Activated naive CD4-positive, alpha-beta T cell treated with anti-CD3 and anti-CD28 coated beads for 36 hours (primary cell): ENCODE measurements at regions of chr10 and their contacts with region 1.

Region 1: DNA sequence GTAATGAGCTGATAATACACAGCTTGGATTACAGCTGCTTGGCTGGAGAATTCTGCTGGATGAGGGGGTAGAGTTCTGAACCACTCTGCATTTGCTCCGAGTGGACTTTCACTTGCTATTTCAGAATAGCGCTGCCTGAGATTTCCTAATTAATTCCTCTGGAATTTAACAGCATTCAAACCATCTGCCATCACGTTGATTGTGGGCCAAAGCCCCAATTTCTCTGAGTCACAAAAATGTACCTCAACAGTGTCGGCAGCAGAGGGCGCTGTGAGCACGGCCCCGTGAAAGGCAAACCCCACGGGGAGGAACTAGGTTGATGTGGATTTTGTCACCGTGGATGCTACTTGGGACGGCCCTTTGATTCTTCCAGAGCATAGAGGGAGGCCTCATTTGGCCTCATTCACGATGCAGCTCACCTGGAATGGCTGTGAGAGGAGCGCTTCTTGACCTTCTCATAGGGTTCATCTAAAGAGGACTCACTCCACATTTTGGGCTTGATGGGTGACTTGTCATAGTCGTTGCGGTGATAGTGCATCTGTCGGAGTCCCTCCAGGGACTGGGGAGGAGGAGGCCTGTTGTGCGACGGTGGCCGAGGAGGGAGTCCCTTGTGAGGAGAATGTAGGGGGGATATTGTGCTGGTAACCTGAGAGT is 73.3 kb downstream of the PRPF18 start:
- DNase-seq: peak; percentile 82
- H3K4me3 Mint-ChIP-seq: no peak overlapping the region
- H3K27ac Mint-ChIP-seq: no peak overlapping the region
- H3K4me1 Mint-ChIP-seq: peaks cover 16% of the 10 kb centered on the region
- H3K27me3 Mint-ChIP-seq: no peaks in the 10 kb centered on the region

Region 2: GRCh38 chr10:13769955-13770354 is 109.9 kb after region 1 on chr10:
- CTCF ChIA-PET with region 1: interaction called, 29 read pairs
- intact Hi-C with region 1: no loop called
- DNase-seq: no peak
- H3K4me3 Mint-ChIP-seq: no peak overlapping the region
- H3K27ac Mint-ChIP-seq: no peak overlapping the region
- H3K4me1 Mint-ChIP-seq: no peaks in the 10 kb centered on the region
- H3K27me3 Mint-ChIP-seq: no peaks in the 10 kb centered on the region

Region 3: DNA sequence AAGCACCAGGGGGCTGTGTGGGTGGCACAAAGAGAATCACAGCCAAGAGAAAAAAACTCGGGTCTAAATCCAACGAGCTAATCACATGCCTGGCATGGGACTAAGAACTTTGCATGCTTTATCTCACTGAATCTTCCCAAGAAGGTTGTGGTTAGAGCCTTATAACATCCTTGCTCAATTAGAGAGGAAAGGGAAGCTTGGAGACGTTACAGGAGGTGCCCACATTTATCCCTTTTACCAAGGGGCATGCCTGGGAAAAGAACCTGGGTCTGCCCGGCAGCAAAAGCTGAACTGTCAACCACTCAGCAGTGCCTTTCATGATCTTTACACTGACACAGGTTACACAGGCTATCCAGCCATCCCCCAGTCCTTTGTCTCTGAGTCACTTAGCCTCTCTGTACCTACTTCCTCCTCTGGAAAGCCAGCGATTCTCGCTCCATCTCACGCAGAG is 116.9 kb after region 1 on chr10:
- CTCF ChIA-PET with region 1: interaction called, 29 read pairs
- intact Hi-C with region 1: loop called (anchors 1 kb)
- DNase-seq: no peak
- H3K4me3 Mint-ChIP-seq: no peak overlapping the region
- H3K27ac Mint-ChIP-seq: no peak overlapping the region
- H3K4me1 Mint-ChIP-seq: no peaks in the 10 kb centered on the region
- H3K27me3 Mint-ChIP-seq: no peaks in the 10 kb centered on the region